ENCODE measurements at regions of chr12 and their contacts with region 1.

Region 1: GRCh38 chr12:11758510-11759493 is 109.3 kb downstream of the ETV6 start:
- DNase-seq: peak in 4 of 5 donors; percentile 52 to 68 (median 60)
- ATAC-seq: peak; percentile 65 to 83 (median 81)
- H3K4me3 ChIP-seq: peak overlapping the region in 2 of 12 donors; percentile 1 to 7
- H3K27ac ChIP-seq: peak overlapping the region; percentile 37 to 93 (median 86)
- H3K4me1 ChIP-seq: peaks cover 5 to 94% (median 74%) of the 10 kb centered on the region in 12 donors
- H3K27me3 ChIP-seq: no peaks in the 10 kb centered on the region
- CTCF ChIP-seq: no peak
- POLR2A ChIP-seq: no peak

Region 2: GRCh38 chr12:11862798-11863197 is 104.0 kb after region 1 on chr12:
- intact Hi-C with region 1: loop called in 6 of 10 experiments (anchors 5 to 10 kb)
- DNase-seq: peak in 1 of 5 donors; percentile 38
- ATAC-seq: peak; percentile 51 to 79 (median 68)
- H3K4me3 ChIP-seq: peak overlapping the region in 1 of 12 donors; percentile 3
- H3K27ac ChIP-seq: peak overlapping the region; percentile 70 to 90 (median 84)
- H3K4me1 ChIP-seq: peaks cover 8 to 55% (median 47%) of the 10 kb centered on the region in 12 donors
- H3K27me3 ChIP-seq: no peaks in the 10 kb centered on the region
- CTCF ChIP-seq: no peak
- POLR2A ChIP-seq: no peak

Measured in heart left ventricle (tissue), 16 donors.